BJ (cell line): ENCODE measurements at regions of chr2 and their contacts with region 1.

Region 1: DNA sequence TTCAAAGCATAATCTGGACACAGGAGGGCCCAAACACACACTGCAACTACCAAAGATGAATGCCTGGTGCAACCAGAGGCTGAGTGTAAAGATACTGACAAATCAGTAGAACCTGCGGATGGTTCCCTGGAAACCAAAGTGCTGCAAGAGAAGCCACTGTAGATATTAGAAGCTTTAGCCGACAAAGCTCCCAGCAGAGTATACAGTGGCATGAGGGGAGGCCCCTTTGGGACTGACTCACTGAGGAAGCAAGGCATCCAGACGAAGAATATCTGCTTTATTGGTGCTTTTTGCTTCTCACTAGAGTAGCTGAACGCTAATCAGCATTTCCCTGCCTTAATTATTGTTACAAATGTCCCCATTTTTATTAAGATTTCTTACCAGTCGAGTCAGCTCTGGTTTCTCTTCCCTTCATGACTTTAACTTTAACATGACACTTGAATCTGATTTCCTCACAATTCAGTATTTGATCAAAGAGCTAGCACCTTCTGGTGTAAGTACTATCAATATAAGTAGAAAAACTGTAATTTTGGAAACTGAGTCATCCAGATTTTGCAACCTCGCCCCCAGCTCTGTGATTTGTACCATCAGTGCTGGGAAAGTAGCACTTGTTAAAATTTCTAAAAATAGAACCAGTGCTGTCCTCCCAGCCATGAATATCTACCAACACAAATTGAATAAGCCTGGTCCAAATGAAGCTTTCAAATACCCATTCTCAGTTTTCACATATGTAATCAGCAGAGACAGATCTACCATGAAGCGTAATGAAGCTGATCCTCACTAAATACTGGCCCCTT is 34.2 kb downstream of the FIGN start:
- DNase-seq: no peak
- H3K4me3 ChIP-seq: no peak overlapping the region
- H3K27me3 ChIP-seq: no peaks in the 10 kb centered on the region
- CTCF ChIP-seq: no peak

Region 2: GRCh38 chr2:163626639-163627109 is 74.9 kb before region 1 on chr2:
- CTCF ChIA-PET with region 1: no interaction called
- POLR2A ChIA-PET with region 1: interaction called, 11 read pairs
- DNase-seq: no peak
- H3K4me3 ChIP-seq: no peak overlapping the region
- H3K27me3 ChIP-seq: no peaks in the 10 kb centered on the region
- CTCF ChIP-seq: no peak